GM13977 (cell line): ENCODE measurements at regions of chr11 and their contacts with region 1.

Region 1: DNA sequence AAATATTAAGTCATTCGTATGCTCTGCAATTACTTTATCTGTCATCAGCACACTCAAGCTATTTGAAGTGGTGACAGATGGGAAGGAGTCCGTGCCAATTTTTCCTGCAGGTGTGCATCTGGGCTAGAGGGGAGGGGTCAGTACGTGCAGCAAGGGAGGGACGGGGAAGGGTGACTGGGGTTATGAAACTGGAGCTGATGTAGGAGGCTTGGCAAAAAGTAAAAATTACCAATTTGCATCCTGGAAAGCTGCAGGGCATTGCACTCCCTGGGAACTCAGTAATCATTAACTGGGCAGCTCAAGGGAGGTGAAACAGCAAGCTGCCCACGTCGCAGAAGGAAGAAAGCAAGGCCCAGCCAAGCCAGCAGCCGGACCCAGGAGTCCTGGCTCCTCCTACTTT is 87.1 kb upstream of the TMEM45B start:
- DNase-seq: no peak
- CTCF ChIP-seq: no peak

Region 2: GRCh38 chr11:129041611-129042018 is 687.0 kb before region 1 on chr11:
- in situ Hi-C with region 1: no loop called
- DNase-seq: no peak
- CTCF ChIP-seq: no peak

Region 3: GRCh38 chr11:129364143-129364654 is 364.4 kb before region 1 on chr11:
- in situ Hi-C with region 1: loop called (anchors 25 kb)
- DNase-seq: peak; percentile 58
- CTCF ChIP-seq: peak; percentile 100